ENCODE measurements at regions of chrX and their contacts with region 1.

Region 1: DNA sequence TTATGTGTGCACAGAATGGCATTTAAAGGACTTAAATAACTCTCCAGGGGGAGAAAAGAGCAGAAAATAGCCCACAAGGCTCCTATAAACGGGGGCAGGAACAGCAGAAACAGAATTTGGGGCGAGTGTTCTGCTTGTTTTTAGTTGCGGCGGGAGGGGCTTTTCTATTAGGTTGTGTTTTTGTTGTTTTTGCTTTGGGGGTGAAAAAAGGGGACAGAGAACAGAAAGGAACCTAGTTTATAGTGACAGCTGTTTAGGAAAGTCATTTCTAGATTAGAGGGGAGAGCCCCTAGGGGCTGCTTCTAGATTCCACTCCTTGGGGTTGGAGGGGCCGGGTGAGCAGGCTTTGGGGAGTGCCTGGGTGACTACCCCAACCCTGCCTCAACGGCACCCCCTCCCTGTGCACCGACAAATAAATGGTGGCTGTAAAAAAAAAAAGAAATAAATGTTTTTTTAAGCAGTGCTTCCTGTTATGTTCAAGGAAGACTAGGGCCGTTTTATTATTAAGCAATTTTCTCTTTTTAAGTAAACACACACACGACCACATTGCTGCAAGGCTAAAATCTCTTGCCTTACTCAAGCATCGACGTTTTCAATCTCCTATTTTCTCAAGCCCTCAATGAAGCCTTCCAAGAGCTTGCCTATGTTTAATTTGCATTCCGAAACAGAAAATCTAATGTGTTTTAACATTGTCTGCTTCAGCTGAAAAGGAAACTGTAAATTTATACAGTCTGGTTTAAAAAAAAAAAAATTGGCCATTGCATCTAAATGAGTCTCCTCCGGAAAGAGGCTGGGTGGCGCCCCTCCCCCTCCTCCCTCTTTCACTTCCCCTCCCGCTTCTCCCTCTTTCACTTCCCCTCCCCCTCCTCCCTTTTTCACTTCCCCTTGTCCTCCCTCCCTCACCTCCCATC is 123.3 kb upstream of the TBL1X start:
- DNase-seq: peak in 6 of 9 experiments; percentile 55 to 84 (median 74)
- ATAC-seq: peak; percentile 50
- H3K4me3 ChIP-seq: peak overlapping the region; percentile 35 to 46
- H3K4me3 Mint-ChIP-seq: peak overlapping the region; percentile 85
- H3K27ac ChIP-seq: peak overlapping the region; percentile 81
- H3K27ac Mint-ChIP-seq: peak overlapping the region; percentile 98
- H3K4me1 ChIP-seq: peaks cover 24% of the 10 kb centered on the region
- H3K4me1 Mint-ChIP-seq: peaks cover 37% of the 10 kb centered on the region
- H3K27me3 ChIP-seq: no peaks in the 10 kb centered on the region
- H3K27me3 Mint-ChIP-seq: no peaks in the 10 kb centered on the region
- CTCF ChIP-seq: no peak

Region 2: GRCh38 chrX:8971116-8971515 is 370.4 kb before region 1 on chrX:
- CTCF ChIA-PET with region 1: no interaction called
- POLR2A ChIA-PET with region 1: no interaction called
- intact Hi-C with region 1: loop called in 1 of 2 experiments (anchors 5 kb)
- DNase-seq: peak in 2 of 9 experiments; percentile 51 to 67
- ATAC-seq: peak; percentile 57
- H3K4me3 ChIP-seq: no peak overlapping the region
- H3K4me3 Mint-ChIP-seq: no peak overlapping the region
- H3K27ac ChIP-seq: no peak overlapping the region
- H3K27ac Mint-ChIP-seq: no peak overlapping the region
- H3K4me1 ChIP-seq: no peaks in the 10 kb centered on the region
- H3K4me1 Mint-ChIP-seq: peaks cover 2% of the 10 kb centered on the region
- H3K27me3 ChIP-seq: no peaks in the 10 kb centered on the region
- H3K27me3 Mint-ChIP-seq: no peaks in the 10 kb centered on the region
- CTCF ChIP-seq: peak; percentile 43

Region 3: DNA sequence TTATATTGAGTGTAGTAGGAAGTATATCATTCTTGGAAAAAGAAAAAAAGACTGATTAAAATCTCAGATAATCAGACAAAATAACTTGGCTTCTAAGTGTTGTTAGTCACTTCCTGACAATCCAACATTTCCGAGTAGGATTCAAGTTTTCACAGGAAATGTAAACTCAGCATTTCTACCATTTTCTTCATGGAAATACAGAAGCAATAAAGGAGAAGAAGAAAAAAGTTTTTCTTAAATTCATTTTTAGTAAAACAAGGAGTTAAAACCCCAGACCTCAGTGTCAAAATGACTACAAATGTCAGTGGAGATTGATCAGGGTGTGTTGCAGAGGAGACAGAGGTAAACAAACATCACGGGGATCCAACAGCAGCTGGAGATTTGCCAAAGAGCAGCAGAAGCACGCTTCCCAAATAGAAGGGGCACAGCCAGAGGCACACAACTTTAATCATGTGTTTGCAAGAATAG is 178.3 kb before region 1 on chrX:
- CTCF ChIA-PET with region 1: no interaction called
- POLR2A ChIA-PET with region 1: no interaction called
- intact Hi-C with region 1: loop called (anchors 5 kb)
- DNase-seq: no peak
- ATAC-seq: no peak
- H3K4me3 ChIP-seq: no peak overlapping the region
- H3K4me3 Mint-ChIP-seq: no peak overlapping the region
- H3K27ac ChIP-seq: no peak overlapping the region
- H3K27ac Mint-ChIP-seq: no peak overlapping the region
- H3K4me1 ChIP-seq: peaks cover 17% of the 10 kb centered on the region
- H3K4me1 Mint-ChIP-seq: peaks cover 28% of the 10 kb centered on the region
- H3K27me3 ChIP-seq: no peaks in the 10 kb centered on the region
- H3K27me3 Mint-ChIP-seq: no peaks in the 10 kb centered on the region
- CTCF ChIP-seq: no peak

Region 4: GRCh38 chrX:9352694-9353411 is 11.3 kb after region 1 on chrX:
- CTCF ChIA-PET with region 1: interaction called, 4 read pairs
- POLR2A ChIA-PET with region 1: interaction called, 5 read pairs
- intact Hi-C with region 1: loop called in 1 of 2 experiments (anchors 1 kb)
- DNase-seq: peak in 5 of 9 experiments; percentile 27 to 70 (median 53)
- ATAC-seq: peak; percentile 9
- H3K4me3 ChIP-seq: peak overlapping the region; percentile 19 to 20
- H3K4me3 Mint-ChIP-seq: peak overlapping the region; percentile 74
- H3K27ac ChIP-seq: peak overlapping the region; percentile 44 to 47
- H3K27ac Mint-ChIP-seq: peak overlapping the region; percentile 80
- H3K4me1 ChIP-seq: peaks cover 32% of the 10 kb centered on the region
- H3K4me1 Mint-ChIP-seq: peaks cover 30% of the 10 kb centered on the region
- H3K27me3 ChIP-seq: no peaks in the 10 kb centered on the region
- H3K27me3 Mint-ChIP-seq: no peaks in the 10 kb centered on the region
- CTCF ChIP-seq: no peak

Region 5: DNA sequence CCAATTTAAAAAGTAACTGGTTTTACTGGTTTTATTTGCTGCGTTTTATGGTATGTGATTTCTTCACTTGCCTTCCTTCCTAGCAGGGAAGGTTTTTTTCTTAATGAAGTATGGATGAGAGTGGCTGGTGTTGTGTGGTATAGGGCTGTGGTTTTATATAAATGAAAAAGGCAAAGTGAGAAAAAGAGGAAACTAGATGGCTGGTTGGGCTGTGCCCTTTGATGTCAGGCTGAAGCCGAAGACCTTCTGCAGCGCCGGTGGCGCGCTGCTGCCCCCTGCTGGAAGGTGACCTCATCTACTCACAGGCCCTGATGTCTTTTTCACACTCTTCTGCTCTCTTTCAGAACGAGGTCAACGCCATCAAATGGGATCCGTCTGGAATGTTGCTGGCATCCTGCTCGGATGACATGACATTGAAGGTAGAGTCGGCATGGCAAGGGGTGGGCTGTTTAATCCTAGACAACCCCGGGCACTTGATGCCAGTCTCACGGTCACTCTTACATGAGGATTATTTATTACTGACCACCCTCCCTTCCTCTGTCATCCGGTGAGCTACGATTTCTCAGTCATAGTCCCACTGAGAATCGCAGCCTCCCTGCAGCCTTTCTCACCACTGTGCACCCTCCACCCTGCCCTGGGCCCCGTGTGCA is 367.5 kb after region 1 on chrX:
- CTCF ChIA-PET with region 1: no interaction called
- POLR2A ChIA-PET with region 1: no interaction called
- intact Hi-C with region 1: loop called (anchors 2 to 5 kb)
- DNase-seq: peak; percentile 48 to 89 (median 75)
- ATAC-seq: peak; percentile 75
- H3K4me3 ChIP-seq: no peak overlapping the region
- H3K4me3 Mint-ChIP-seq: no peak overlapping the region
- H3K27ac ChIP-seq: no peak overlapping the region
- H3K27ac Mint-ChIP-seq: peak overlapping the region; percentile 27
- H3K4me1 ChIP-seq: peaks cover 4% of the 10 kb centered on the region
- H3K4me1 Mint-ChIP-seq: peaks cover 13% of the 10 kb centered on the region
- H3K27me3 ChIP-seq: no peaks in the 10 kb centered on the region
- H3K27me3 Mint-ChIP-seq: no peaks in the 10 kb centered on the region
- CTCF ChIP-seq: peak; percentile 46

Measured in CD8-positive, alpha-beta T cell (primary cell).